ENCODE measurements at regions of chr5 and their contacts with region 1.

Region 1: DNA sequence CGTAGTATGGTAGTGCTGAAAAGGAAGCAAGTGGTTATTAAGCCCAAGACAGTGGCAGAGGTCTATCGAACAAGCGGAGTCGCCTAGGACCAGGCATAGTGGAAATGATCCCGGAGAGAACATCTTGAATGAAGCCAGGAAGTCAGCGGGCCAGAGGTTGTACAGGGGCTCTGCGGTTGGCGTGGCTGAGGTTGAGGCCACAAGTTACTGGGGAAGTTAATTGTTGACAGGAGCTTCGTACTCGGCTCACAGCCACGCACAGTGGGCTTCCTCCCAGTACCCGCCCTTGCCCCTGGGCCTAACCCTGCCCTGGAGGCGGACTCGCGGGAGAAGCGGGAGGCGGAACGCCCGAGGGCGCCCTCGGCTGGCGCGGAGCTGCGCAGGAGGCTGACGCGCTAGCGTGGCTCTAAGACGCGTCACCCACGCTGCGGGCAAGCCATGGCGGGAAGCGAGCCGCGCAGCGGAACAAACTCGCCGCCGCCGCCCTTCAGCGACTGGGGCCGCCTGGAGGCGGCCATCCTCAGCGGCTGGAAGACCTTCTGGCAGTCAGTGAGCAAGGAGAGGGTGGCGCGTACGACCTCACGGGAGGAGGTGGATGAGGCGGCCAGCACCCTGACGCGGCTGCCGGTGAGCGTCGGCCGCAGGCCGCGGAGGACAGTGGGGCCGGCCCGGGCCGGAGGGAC is at the start of gene FBXO4:
- DNase-seq: peak; percentile 76 to 96 (median 86)
- ATAC-seq: peak; percentile 95
- H3K4me3 ChIP-seq: peak within 1 kb of the TSS; percentile 81
- H3K4me3 Mint-ChIP-seq: peak within 1 kb of the TSS; percentile 87
- H3K27ac ChIP-seq: peak within 1 kb of the TSS; percentile 93 to 95
- H3K27ac Mint-ChIP-seq: peak within 1 kb of the TSS; percentile 93
- H3K4me1 ChIP-seq: peaks cover 20% of the 10 kb centered on the region
- H3K4me1 Mint-ChIP-seq: peaks cover 29% of the 10 kb centered on the region
- H3K27me3 ChIP-seq: no peaks in the 10 kb centered on the region
- H3K27me3 Mint-ChIP-seq: no peaks in the 10 kb centered on the region
- CTCF ChIP-seq: peak; percentile 71
- total RNA-seq, gene FBXO4: 7.0 to 8.1 TPM

Region 2: GRCh38 chr5:41822036-41822435 is 103.0 kb before region 1 on chr5:
- CTCF ChIA-PET with region 1: no interaction called
- POLR2A ChIA-PET with region 1: no interaction called
- intact Hi-C with region 1: no loop called
- DNase-seq: no peak
- ATAC-seq: no peak
- H3K4me3 ChIP-seq: no peak overlapping the region
- H3K4me3 Mint-ChIP-seq: no peak overlapping the region
- H3K27ac ChIP-seq: no peak overlapping the region
- H3K27ac Mint-ChIP-seq: no peak overlapping the region
- H3K4me1 ChIP-seq: no peaks in the 10 kb centered on the region
- H3K4me1 Mint-ChIP-seq: peaks cover 24% of the 10 kb centered on the region
- H3K27me3 ChIP-seq: no peaks in the 10 kb centered on the region
- H3K27me3 Mint-ChIP-seq: no peaks in the 10 kb centered on the region
- CTCF ChIP-seq: no peak

Region 3: GRCh38 chr5:41869739-41870626 is 55.0 kb before region 1 on chr5 and contains the start of gene OXCT1:
- CTCF ChIA-PET with region 1: interaction called, 9 read pairs
- POLR2A ChIA-PET with region 1: interaction called, 41 read pairs
- intact Hi-C with region 1: loop called (anchors 1 kb)
- DNase-seq: peak; percentile 91 to 98 (median 93)
- ATAC-seq: peak; percentile 92
- H3K4me3 ChIP-seq: peak within 1 kb of the TSS; percentile 81
- H3K4me3 Mint-ChIP-seq: peak within 1 kb of the TSS; percentile 92
- H3K27ac ChIP-seq: peak within 1 kb of the TSS; percentile 88
- H3K27ac Mint-ChIP-seq: peak within 1 kb of the TSS; percentile 95
- H3K4me1 ChIP-seq: peaks cover 30% of the 10 kb centered on the region
- H3K4me1 Mint-ChIP-seq: peaks cover 69% of the 10 kb centered on the region
- H3K27me3 ChIP-seq: no peaks in the 10 kb centered on the region
- H3K27me3 Mint-ChIP-seq: no peaks in the 10 kb centered on the region
- CTCF ChIP-seq: no peak
- total RNA-seq, gene OXCT1: 14.7 to 15.3 TPM

Region 4: GRCh38 chr5:41903892-41904799 is 20.9 kb before region 1 on chr5 and contains the start of gene RIMOC1:
- CTCF ChIA-PET with region 1: interaction called, 22 read pairs
- POLR2A ChIA-PET with region 1: interaction called, 103 read pairs
- intact Hi-C with region 1: loop called (anchors 1 kb)
- DNase-seq: peak; percentile 93 to 99 (median 96)
- ATAC-seq: peak; percentile 85
- H3K4me3 ChIP-seq: peak within 1 kb of the TSS; percentile 86
- H3K4me3 Mint-ChIP-seq: peak within 1 kb of the TSS; percentile 98
- H3K27ac ChIP-seq: peak within 1 kb of the TSS; percentile 89 to 90
- H3K27ac Mint-ChIP-seq: peak within 1 kb of the TSS; percentile 99
- H3K4me1 ChIP-seq: peaks cover 20% of the 10 kb centered on the region
- H3K4me1 Mint-ChIP-seq: peaks cover 46% of the 10 kb centered on the region
- H3K27me3 ChIP-seq: no peaks in the 10 kb centered on the region
- H3K27me3 Mint-ChIP-seq: no peaks in the 10 kb centered on the region
- CTCF ChIP-seq: no peak
- total RNA-seq, gene RIMOC1: 9.3 to 10.3 TPM

Region 5: GRCh38 chr5:42057254-42057690 is 132.3 kb after region 1 on chr5:
- CTCF ChIA-PET with region 1: no interaction called
- POLR2A ChIA-PET with region 1: no interaction called
- intact Hi-C with region 1: loop called in 1 of 2 experiments (anchors 5 kb)
- DNase-seq: peak; percentile 27 to 74 (median 44)
- ATAC-seq: peak; percentile 84
- H3K4me3 ChIP-seq: no peak overlapping the region
- H3K4me3 Mint-ChIP-seq: no peak overlapping the region
- H3K27ac ChIP-seq: no peak overlapping the region
- H3K27ac Mint-ChIP-seq: no peak overlapping the region
- H3K4me1 ChIP-seq: no peaks in the 10 kb centered on the region
- H3K4me1 Mint-ChIP-seq: no peaks in the 10 kb centered on the region
- H3K27me3 ChIP-seq: no peaks in the 10 kb centered on the region
- H3K27me3 Mint-ChIP-seq: peaks cover 10% of the 10 kb centered on the region
- CTCF ChIP-seq: peak; percentile 78

Region 6: DNA sequence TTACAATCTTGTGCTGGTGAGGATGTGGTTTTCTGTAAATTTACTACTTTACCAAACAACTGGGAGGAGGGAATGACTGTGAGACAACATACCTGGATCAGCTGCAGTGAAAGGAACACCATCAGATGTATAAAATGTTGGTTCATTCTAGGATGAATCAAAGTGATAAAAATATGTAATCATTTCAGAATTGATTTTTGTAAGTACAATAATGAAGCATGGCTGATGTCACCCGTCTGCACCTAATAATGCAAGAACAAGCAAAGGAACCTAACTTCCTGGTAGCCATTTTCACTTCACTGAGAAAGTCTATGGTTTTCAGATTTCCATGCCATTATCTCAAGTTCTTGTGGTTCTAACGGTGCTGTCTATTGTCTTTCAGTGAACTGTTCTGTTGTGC is 1608.6 kb after region 1 on chr5:
- CTCF ChIA-PET with region 1: no interaction called
- POLR2A ChIA-PET with region 1: no interaction called
- intact Hi-C with region 1: no loop called
- DNase-seq: no peak
- ATAC-seq: no peak
- H3K4me3 ChIP-seq: no peak overlapping the region
- H3K4me3 Mint-ChIP-seq: no peak overlapping the region
- H3K27ac ChIP-seq: no peak overlapping the region
- H3K27ac Mint-ChIP-seq: peak overlapping the region; percentile 56
- H3K4me1 ChIP-seq: no peaks in the 10 kb centered on the region
- H3K4me1 Mint-ChIP-seq: peaks cover 19% of the 10 kb centered on the region
- H3K27me3 ChIP-seq: no peaks in the 10 kb centered on the region
- H3K27me3 Mint-ChIP-seq: no peaks in the 10 kb centered on the region
- CTCF ChIP-seq: no peak

Measured in CD4-positive, alpha-beta T cell (primary cell).